Activated naive CD4-positive, alpha-beta T cell treated with anti-CD3 and anti-CD28 coated beads for 36 hours (primary cell): ENCODE measurements at regions of chr12 and their contacts with region 1.

Region 1: DNA sequence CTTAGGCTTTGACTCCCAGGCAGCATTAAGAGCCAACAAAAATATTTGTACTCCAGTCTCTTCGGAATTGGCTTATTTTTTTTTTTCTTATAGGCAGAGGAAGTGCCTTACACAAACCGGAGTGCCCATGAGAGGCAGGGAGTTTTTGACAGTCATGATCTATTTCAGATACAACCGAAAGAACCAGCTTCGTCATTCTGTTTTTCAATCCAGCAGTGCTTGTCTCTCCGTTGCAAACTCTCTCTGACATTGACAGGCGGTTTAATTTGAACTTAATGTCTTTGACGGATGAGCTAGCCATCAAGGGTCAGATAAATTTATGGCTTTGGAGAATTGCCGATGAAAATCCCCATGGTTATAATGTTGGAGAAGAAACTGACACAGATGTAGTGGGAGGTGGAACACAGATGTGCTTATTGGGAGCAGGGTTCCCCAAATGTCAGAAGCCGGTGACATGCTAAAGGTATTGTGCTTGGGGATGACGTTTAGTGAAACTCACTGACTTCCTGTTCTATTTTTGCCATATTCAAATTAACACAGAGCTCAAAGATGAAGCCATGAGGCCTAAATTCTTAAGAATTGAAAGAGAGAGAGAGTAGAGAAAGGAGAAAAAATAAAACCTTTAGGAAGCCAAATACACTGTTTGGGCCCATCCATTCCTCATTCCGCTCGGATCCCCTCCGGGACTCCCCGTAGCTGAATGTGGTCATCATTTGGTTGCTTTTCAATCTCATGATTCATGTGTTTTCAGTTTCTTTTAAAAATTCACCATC is 59.7 kb downstream of the PLXNC1 start:
- DNase-seq: peak; percentile 67
- H3K4me3 Mint-ChIP-seq: peak overlapping the region; percentile 70
- H3K27ac Mint-ChIP-seq: peak overlapping the region; percentile 97
- H3K4me1 Mint-ChIP-seq: peaks cover 62% of the 10 kb centered on the region
- H3K27me3 Mint-ChIP-seq: no peaks in the 10 kb centered on the region

Region 2: GRCh38 chr12:93569656-93570551 is 638.1 kb before region 1 on chr12:
- CTCF ChIA-PET with region 1: no interaction called
- intact Hi-C with region 1: loop called (anchors 2 kb)
- DNase-seq: peak; percentile 88
- H3K4me3 Mint-ChIP-seq: peak overlapping the region; percentile 83
- H3K27ac Mint-ChIP-seq: peak overlapping the region; percentile 81
- H3K4me1 Mint-ChIP-seq: peaks cover 15% of the 10 kb centered on the region
- H3K27me3 Mint-ChIP-seq: peaks cover 17% of the 10 kb centered on the region

Region 3: DNA sequence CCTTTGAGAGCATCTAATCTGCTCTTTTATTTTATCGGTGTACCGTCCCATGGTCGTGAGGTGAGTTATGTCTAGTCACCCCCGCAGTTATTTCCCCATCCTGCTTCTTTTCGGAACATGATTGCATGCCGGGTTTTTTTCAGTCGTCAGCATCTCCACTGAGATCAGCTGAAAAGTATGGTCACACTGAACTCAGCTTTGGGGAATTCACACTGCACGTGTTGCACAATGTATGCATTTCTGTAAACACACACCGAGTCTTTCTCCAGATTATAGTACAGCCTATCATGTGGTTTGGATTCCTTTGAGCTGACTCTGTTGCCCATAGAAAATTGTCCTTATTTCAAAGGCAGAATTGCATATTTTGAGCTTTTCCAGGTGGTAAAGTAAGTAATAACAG is 35.1 kb before region 1 on chr12:
- CTCF ChIA-PET with region 1: interaction called, 3 read pairs
- intact Hi-C with region 1: loop called (anchors 1 kb)
- DNase-seq: no peak
- H3K4me3 Mint-ChIP-seq: no peak overlapping the region
- H3K27ac Mint-ChIP-seq: no peak overlapping the region
- H3K4me1 Mint-ChIP-seq: peaks cover 64% of the 10 kb centered on the region
- H3K27me3 Mint-ChIP-seq: no peaks in the 10 kb centered on the region

Region 4: GRCh38 chr12:94254270-94254669 is 46.2 kb after region 1 on chr12:
- CTCF ChIA-PET with region 1: no interaction called
- intact Hi-C with region 1: no loop called
- DNase-seq: no peak
- H3K4me3 Mint-ChIP-seq: no peak overlapping the region
- H3K27ac Mint-ChIP-seq: no peak overlapping the region
- H3K4me1 Mint-ChIP-seq: peaks cover 4% of the 10 kb centered on the region
- H3K27me3 Mint-ChIP-seq: no peaks in the 10 kb centered on the region

Region 5: DNA sequence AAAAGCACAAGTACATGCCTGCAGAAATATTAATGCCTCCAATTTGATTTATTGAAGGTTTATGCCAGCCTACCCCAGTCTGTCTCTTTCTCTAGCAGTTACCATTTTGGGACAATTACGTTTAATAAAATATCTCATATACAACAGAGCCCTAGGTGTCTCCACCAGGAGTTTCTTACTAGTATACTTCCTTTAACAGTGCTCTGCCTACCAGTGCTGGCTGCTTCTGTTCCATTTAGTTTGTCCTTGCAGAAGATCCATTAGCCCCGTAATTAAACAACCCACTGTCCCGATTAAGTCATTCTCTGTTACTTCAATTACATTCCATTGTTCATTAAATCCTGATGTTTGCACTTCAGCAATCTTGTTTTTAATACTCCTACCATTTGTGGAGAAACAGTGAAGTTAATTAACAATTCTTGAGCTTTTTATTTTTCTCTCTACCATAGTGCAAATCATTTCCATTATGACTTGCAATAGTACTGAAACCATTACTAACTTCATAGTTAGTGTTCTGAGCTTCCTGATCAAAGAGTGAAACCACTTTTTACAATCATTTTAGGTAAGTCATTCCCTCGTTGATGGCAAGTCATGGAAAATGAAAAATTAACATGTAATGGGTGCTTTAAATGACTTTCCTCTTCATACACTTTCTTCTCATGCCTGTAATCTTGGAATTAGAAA is 61.4 kb after region 1 on chr12:
- CTCF ChIA-PET with region 1: no interaction called
- intact Hi-C with region 1: loop called (anchors 1 kb)
- DNase-seq: no peak
- H3K4me3 Mint-ChIP-seq: no peak overlapping the region
- H3K27ac Mint-ChIP-seq: peak overlapping the region; percentile 30
- H3K4me1 Mint-ChIP-seq: peaks cover 46% of the 10 kb centered on the region
- H3K27me3 Mint-ChIP-seq: no peaks in the 10 kb centered on the region

Region 6: GRCh38 chr12:94372461-94372860 is 164.4 kb after region 1 on chr12:
- CTCF ChIA-PET with region 1: no interaction called
- intact Hi-C with region 1: loop called (anchors 1 kb)
- DNase-seq: peak; percentile 7
- H3K4me3 Mint-ChIP-seq: no peak overlapping the region
- H3K27ac Mint-ChIP-seq: peak overlapping the region; percentile 66
- H3K4me1 Mint-ChIP-seq: peaks cover 23% of the 10 kb centered on the region
- H3K27me3 Mint-ChIP-seq: no peaks in the 10 kb centered on the region

Region 7: DNA sequence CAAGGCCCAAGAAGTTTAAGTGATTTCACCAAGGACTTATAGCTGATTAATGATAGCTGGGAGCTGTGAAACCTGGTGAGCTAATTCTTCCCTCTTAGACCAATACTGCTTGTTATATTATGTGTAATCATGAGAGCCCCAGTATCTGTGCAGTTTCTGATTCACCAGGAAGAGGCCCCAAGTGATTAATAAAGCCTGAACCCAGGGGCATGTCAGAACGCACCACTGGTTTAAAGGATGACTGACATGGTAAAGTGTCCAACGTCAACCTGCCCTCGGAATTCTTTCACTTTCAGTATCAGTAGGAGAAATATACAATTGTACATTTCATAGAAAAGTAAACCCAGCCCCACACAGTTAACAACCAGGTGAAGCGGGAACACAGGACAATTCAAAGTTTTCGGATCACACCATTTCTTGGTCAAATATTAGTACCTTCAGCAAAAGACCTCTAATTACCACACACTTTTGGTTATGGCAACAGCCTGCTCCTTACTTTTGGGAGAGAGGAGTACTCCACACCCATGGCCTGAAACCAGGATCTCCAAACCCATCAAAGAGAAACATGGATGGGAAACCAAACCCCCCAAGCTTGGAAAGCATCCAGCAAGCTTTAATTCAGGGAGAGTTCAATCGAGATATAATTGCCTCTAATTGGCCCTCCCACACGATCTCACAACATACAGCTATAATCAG is 413.8 kb after region 1 on chr12:
- CTCF ChIA-PET with region 1: no interaction called
- intact Hi-C with region 1: loop called (anchors 1 kb)
- DNase-seq: peak; percentile 66
- H3K4me3 Mint-ChIP-seq: no peak overlapping the region
- H3K27ac Mint-ChIP-seq: no peak overlapping the region
- H3K4me1 Mint-ChIP-seq: peaks cover 20% of the 10 kb centered on the region
- H3K27me3 Mint-ChIP-seq: no peaks in the 10 kb centered on the region